Left cardiac atrium (tissue), 4 donors: ENCODE measurements at regions of chr14 and their contacts with region 1.

Region 1: DNA sequence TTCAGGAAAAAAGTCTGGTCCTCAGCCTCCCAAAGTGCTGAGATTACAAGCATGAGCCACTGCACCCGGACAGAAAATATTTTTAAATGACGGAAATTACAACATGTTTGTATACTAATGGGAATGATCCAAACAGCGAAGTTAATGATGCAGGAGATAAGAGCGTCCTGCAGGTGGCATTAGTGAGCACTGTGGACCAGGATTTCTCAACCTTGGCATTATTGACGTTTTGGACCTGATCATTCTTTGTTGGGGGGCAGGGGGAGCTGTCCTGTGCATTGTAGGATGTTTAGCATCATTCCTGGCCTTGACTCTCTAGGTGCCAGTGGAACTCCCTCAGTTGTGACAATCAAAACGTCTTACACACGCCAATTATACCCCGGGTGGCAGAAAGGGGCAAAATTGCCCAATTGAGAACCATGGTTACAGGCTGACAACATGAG is 34.1 kb downstream of the SCFD1 start:
- DNase-seq: peak; percentile 24
- ATAC-seq: peak in 1 of 2 donors; percentile 47

Region 2: GRCh38 chr14:30906752-30907658 is 250.8 kb after region 1 on chr14:
- intact Hi-C with region 1: loop called in 1 of 2 experiments (anchors 10 kb)
- DNase-seq: no peak
- ATAC-seq: no peak